AG04449 (cell line): ENCODE measurements at regions of chr6 and their contacts with region 1.

Region 1: DNA sequence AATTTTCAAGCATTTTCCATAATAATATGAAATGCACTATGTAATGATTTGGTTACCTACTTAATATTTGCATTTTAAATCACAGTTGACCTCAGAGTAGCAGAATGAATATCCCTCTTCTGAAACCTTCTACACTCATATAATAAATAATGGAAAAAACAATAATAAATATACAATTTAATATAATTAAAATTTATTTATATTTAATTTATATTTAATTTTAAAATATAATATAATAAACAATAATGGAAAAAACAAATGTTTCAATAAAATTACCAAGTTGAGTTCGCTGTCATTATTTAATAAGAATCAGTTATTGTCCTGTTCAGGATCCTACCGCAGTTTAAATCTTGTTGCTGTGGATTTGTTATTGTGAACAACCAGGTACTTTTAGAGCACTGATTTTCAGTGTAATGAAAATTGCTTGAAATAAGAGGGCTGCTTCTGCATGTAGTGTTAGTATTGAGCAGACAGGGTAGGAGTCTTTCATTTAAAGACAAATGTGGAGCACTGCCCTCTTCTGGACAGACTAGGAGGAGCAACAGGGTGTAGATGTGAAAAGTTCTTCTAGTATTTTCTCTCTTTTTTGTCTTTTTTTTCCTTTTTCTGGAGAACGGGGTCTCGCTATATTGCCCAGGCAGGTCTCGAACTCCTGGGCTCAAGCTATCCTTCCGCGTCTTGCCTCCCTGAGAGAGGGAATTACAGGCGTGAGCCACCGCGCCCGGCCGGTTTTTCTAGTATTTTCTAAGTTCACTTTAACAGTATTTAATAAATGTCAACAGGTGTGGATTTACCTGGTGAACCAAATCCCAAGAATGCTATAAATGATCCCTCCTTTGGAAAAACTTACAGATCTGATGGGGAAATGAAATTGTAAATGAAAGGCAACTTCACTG is 13.6 kb downstream of the TRAPPC3L start:
- DNase-seq: no peak
- H3K4me3 ChIP-seq: no peak overlapping the region
- CTCF ChIP-seq: peak; percentile 57

Region 2: DNA sequence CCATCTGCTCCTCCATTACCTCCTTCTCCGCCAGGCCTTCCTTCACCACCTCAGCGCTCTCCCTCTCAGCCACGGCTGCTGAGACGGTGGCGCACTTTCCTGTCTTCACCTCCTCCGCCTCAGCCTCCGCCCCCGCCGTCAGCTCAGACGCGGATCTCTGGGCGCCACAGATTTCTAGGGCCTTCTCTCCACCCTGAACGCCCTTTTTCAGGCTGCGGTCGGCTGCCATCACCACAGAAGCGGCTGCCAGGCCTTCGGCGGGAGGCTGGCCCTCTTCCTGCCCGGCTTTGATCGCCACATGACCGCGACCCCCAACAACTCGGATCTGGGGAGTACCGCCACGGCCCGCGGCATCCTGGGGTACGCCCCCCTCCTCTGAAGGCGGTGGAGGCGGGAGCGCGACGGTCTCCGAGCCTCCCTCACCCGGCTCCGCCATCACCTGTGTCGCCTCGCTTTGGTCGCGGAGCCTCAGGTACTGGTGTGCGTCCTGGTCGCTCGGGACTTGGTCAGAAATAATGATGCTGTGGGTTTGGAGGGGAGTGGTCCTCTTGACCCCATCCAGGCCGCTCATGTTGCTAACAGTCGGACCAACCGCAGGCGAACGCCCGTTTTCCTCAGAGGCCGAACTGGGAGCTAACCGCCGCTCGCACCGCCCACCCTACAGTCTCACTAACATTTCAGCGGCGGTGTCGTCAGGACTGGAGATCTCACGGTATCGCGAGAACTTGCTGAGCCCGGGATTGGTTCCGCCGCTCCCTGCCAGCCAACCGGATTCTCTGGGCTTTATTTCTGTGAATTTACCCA is 252.5 kb before region 1 on chr6 and contains the start of gene TSPYL1:
- CTCF ChIA-PET with region 1: interaction called, 37 read pairs
- POLR2A ChIA-PET with region 1: interaction called, 3 read pairs
- DNase-seq: peak; percentile 59
- H3K4me3 ChIP-seq: peak within 1 kb of the TSS; percentile 90
- CTCF ChIP-seq: no peak

Region 3: DNA sequence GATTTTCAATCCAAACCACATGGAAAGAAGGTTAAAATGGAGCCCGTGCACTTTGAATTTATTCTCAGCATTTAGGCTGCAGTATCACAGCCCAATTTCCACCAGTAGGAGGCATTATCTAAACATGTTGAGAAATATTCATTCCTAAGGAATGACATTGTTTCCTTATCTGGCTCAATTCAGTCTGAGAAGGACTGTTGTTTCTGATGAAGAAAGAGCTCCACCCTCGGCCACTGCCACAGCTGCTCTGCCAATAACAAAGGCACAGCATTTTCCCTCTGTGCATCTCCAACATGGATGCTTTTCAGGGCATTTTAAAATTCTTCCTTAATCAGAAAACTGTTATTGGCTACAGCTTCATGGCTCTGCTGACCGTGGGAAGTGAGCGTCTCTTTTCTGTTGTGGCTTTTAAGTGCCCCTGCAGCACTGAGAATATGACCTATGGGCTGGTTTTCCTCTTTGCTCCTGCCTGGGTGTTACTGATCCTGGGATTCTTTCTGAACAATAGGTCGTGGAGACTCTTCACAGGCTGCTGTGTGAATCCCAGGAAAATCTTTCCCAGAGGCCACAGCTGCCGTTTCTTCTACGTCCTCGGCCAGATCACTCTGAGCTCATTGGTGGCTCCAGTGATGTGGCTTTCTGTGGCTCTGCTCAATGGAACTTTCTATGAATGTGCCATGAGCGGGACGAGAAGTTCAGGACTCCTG is 20.4 kb before region 1 on chr6 and contains the start of gene CALHM5:
- CTCF ChIA-PET with region 1: interaction called, 35 read pairs
- POLR2A ChIA-PET with region 1: no interaction called
- DNase-seq: peak; percentile 46
- H3K4me3 ChIP-seq: peak within 1 kb of the TSS; percentile 59
- CTCF ChIP-seq: peak; percentile 53

Region 4: DNA sequence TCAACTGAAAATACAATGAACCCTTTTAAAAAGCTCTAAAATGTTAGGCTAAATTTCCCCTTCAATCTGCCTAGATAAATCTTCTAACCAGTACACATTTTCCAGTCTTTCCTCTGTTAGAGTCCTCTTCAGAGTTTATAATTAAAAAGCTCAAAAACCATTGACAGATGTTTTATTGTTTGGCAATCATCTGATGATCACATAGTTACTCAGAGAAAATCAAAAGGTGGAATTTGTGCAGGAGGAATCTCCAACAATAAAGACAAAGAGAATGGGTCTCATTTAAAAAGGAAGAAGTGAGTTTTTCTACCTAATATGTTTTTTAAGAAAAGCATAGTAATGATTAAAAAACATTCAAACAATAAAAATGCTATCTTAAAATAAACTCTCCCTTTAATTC is 10.5 kb after region 1 on chr6:
- CTCF ChIA-PET with region 1: interaction called, 66 read pairs
- POLR2A ChIA-PET with region 1: no interaction called
- DNase-seq: no peak
- H3K4me3 ChIP-seq: no peak overlapping the region
- CTCF ChIP-seq: no peak

Region 5: GRCh38 chr6:116561377-116562018 is 29.6 kb after region 1 on chr6:
- CTCF ChIA-PET with region 1: interaction called, 188 read pairs
- POLR2A ChIA-PET with region 1: interaction called, 3 read pairs
- DNase-seq: no peak
- H3K4me3 ChIP-seq: no peak overlapping the region
- CTCF ChIP-seq: peak; percentile 70